CD8-positive, alpha-beta T cell (primary cell): ENCODE measurements at regions of chr1 and their contacts with region 1.

Region 1: GRCh38 chr1:104746994-104747393 is 997.3 kb downstream of the AMY1C start:
- DNase-seq: no peak
- ATAC-seq: no peak
- H3K4me3 ChIP-seq: no peak overlapping the region
- H3K4me3 Mint-ChIP-seq: no peak overlapping the region
- H3K27ac ChIP-seq: no peak overlapping the region
- H3K27ac Mint-ChIP-seq: no peak overlapping the region
- H3K4me1 ChIP-seq: no peaks in the 10 kb centered on the region
- H3K4me1 Mint-ChIP-seq: no peaks in the 10 kb centered on the region
- H3K27me3 ChIP-seq: no peaks in the 10 kb centered on the region
- H3K27me3 Mint-ChIP-seq: no peaks in the 10 kb centered on the region
- CTCF ChIP-seq: no peak

Region 2: GRCh38 chr1:104636581-104636980 is 110.4 kb before region 1 on chr1:
- CTCF ChIA-PET with region 1: no interaction called
- POLR2A ChIA-PET with region 1: no interaction called
- intact Hi-C with region 1: no loop called
- DNase-seq: no peak
- ATAC-seq: no peak
- H3K4me3 ChIP-seq: no peak overlapping the region
- H3K4me3 Mint-ChIP-seq: no peak overlapping the region
- H3K27ac ChIP-seq: no peak overlapping the region
- H3K27ac Mint-ChIP-seq: no peak overlapping the region
- H3K4me1 ChIP-seq: no peaks in the 10 kb centered on the region
- H3K4me1 Mint-ChIP-seq: no peaks in the 10 kb centered on the region
- H3K27me3 ChIP-seq: no peaks in the 10 kb centered on the region
- H3K27me3 Mint-ChIP-seq: no peaks in the 10 kb centered on the region
- CTCF ChIP-seq: no peak

Region 3: DNA sequence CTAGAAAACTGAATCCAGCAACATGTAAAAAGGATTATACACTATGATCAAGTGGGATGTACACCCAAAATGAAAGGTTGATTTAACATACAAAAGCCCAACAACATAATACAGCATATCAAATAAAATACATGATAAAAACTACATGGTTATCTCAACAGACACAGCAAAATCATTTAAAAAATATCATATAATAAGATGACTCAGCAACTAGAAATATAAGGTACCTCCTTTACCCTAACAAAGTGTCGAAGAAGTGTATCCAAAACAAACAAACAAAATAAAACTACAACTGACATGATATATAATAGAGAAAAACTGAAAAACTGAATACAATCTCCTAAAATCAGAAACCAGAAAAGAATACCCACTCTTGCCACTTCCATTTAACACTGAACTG is 28.2 kb before region 1 on chr1:
- CTCF ChIA-PET with region 1: no interaction called
- POLR2A ChIA-PET with region 1: no interaction called
- intact Hi-C with region 1: loop called in 1 of 2 experiments (anchors 5 kb)
- DNase-seq: no peak
- ATAC-seq: no peak
- H3K4me3 ChIP-seq: no peak overlapping the region
- H3K4me3 Mint-ChIP-seq: no peak overlapping the region
- H3K27ac ChIP-seq: no peak overlapping the region
- H3K27ac Mint-ChIP-seq: no peak overlapping the region
- H3K4me1 ChIP-seq: no peaks in the 10 kb centered on the region
- H3K4me1 Mint-ChIP-seq: no peaks in the 10 kb centered on the region
- H3K27me3 ChIP-seq: no peaks in the 10 kb centered on the region
- H3K27me3 Mint-ChIP-seq: no peaks in the 10 kb centered on the region
- CTCF ChIP-seq: no peak

Region 4: GRCh38 chr1:105483436-105483835 is 736.4 kb after region 1 on chr1:
- CTCF ChIA-PET with region 1: no interaction called
- POLR2A ChIA-PET with region 1: no interaction called
- intact Hi-C with region 1: no loop called
- DNase-seq: no peak
- ATAC-seq: no peak
- H3K4me3 ChIP-seq: no peak overlapping the region
- H3K4me3 Mint-ChIP-seq: no peak overlapping the region
- H3K27ac ChIP-seq: no peak overlapping the region
- H3K27ac Mint-ChIP-seq: no peak overlapping the region
- H3K4me1 ChIP-seq: no peaks in the 10 kb centered on the region
- H3K4me1 Mint-ChIP-seq: no peaks in the 10 kb centered on the region
- H3K27me3 ChIP-seq: no peaks in the 10 kb centered on the region
- H3K27me3 Mint-ChIP-seq: no peaks in the 10 kb centered on the region
- CTCF ChIP-seq: no peak